ENCODE measurements at regions of chr6 and their contacts with region 1.

Region 1: GRCh38 chr6:20126789-20127653 is 85.2 kb downstream of the MBOAT1 start:
- DNase-seq: peak; percentile 64
- H3K4me3 Mint-ChIP-seq: no peak overlapping the region
- H3K27ac Mint-ChIP-seq: no peak overlapping the region
- H3K4me1 Mint-ChIP-seq: peaks cover 5% of the 10 kb centered on the region
- H3K27me3 Mint-ChIP-seq: no peaks in the 10 kb centered on the region

Region 2: GRCh38 chr6:19892260-19892659 is 234.8 kb before region 1 on chr6:
- CTCF ChIA-PET with region 1: no interaction called
- POLR2A ChIA-PET with region 1: no interaction called
- DNase-seq: no peak
- H3K4me3 Mint-ChIP-seq: no peak overlapping the region
- H3K27ac Mint-ChIP-seq: no peak overlapping the region
- H3K4me1 Mint-ChIP-seq: no peaks in the 10 kb centered on the region
- H3K27me3 Mint-ChIP-seq: no peaks in the 10 kb centered on the region

Region 3: DNA sequence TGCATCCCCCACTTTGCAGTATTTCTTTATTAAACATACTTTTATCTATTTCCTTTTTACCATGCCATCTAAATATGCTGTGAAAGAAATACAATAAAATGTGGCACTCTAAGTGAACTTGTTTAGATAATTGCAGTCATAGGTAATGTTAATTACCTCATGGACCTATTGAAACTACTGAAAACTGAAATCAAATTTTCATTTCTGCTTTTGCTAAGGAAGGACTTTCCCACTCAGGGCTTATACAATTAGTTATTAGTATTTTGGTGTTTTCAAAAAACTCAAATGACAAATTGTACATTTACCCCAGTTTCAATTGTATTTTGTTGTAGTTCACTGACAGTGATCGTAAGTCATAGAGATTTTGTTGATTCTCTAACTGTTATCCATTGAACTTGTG is 201.5 kb before region 1 on chr6:
- CTCF ChIA-PET with region 1: no interaction called
- POLR2A ChIA-PET with region 1: no interaction called
- DNase-seq: no peak
- H3K4me3 Mint-ChIP-seq: no peak overlapping the region
- H3K27ac Mint-ChIP-seq: no peak overlapping the region
- H3K4me1 Mint-ChIP-seq: no peaks in the 10 kb centered on the region
- H3K27me3 Mint-ChIP-seq: no peaks in the 10 kb centered on the region

Region 4: DNA sequence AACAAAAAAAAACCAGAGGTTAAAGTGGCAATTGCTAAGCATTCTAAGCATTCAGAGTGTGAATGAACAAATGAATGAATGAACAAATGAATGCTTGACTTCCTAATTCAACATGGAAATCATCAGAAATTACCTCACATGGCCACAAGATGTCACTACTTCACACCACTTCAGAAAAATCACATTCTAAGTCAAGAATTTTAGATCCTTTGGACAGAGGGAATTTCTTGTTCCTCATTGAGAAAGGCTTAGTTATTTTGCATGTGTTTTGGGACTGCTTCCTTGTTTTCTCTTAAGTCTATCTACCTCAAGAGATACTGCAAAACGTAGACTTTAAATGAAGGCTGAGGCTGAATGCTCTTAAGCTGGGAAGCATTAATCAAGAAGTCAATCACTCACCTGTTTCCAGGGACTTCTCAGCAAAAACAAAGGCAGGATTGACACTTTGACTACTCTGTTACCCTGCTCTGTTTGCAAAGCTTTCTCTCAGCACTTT is 34.9 kb before region 1 on chr6:
- CTCF ChIA-PET with region 1: interaction called, 37 read pairs
- POLR2A ChIA-PET with region 1: no interaction called
- DNase-seq: no peak
- H3K4me3 Mint-ChIP-seq: no peak overlapping the region
- H3K27ac Mint-ChIP-seq: no peak overlapping the region
- H3K4me1 Mint-ChIP-seq: no peaks in the 10 kb centered on the region
- H3K27me3 Mint-ChIP-seq: no peaks in the 10 kb centered on the region

Region 5: DNA sequence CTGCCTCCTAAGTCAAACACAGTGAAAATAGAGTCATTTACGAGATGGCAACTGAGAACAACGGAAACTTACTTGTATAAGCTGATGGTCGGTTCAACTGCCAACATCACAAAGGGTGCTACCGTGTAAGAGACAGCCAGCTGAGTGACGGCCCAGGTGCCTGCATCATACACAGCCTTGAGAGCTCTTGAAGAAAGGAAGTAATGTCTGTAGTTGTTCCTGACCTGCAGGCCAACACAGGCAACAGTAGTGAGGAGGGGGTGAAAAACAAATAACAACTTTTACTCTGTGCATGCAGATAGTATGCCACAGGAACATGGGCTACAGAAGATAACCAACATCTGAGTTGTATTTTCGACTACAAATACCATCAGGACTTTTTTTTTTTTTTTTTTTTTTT is 17.5 kb before region 1 on chr6:
- CTCF ChIA-PET with region 1: interaction called, 32 read pairs
- POLR2A ChIA-PET with region 1: no interaction called
- DNase-seq: no peak
- H3K4me3 Mint-ChIP-seq: no peak overlapping the region
- H3K27ac Mint-ChIP-seq: no peak overlapping the region
- H3K4me1 Mint-ChIP-seq: peaks cover 6% of the 10 kb centered on the region
- H3K27me3 Mint-ChIP-seq: no peaks in the 10 kb centered on the region

Region 6: DNA sequence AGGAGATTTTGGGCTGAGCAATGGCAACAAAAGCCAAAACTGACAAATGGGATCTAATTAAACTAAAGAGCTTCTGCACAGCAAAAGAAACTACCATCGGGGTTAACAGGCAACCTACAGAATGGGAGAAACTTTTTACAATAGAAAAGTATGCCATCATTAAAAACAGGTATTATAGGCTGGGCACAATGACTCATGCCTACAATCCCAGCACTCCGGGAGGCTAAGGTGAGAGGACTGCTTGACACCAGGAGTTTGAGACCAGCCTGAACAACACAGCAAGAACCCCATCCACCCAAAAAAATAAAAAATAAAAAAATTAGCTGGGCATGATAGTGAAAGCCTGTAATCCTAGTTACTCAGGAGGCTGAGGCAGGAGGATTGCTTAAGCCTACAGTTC is 29.8 kb after region 1 on chr6:
- CTCF ChIA-PET with region 1: interaction called, 10 read pairs
- POLR2A ChIA-PET with region 1: no interaction called
- DNase-seq: no peak
- H3K4me3 Mint-ChIP-seq: no peak overlapping the region
- H3K27ac Mint-ChIP-seq: no peak overlapping the region
- H3K4me1 Mint-ChIP-seq: no peaks in the 10 kb centered on the region
- H3K27me3 Mint-ChIP-seq: no peaks in the 10 kb centered on the region

Region 7: GRCh38 chr6:20202324-20202658 is 75.3 kb after region 1 on chr6:
- CTCF ChIA-PET with region 1: interaction called, 10 read pairs
- POLR2A ChIA-PET with region 1: no interaction called
- DNase-seq: no peak
- H3K4me3 Mint-ChIP-seq: no peak overlapping the region
- H3K27ac Mint-ChIP-seq: peak overlapping the region; percentile 22
- H3K4me1 Mint-ChIP-seq: peaks cover 80% of the 10 kb centered on the region
- H3K27me3 Mint-ChIP-seq: no peaks in the 10 kb centered on the region

Region 8: DNA sequence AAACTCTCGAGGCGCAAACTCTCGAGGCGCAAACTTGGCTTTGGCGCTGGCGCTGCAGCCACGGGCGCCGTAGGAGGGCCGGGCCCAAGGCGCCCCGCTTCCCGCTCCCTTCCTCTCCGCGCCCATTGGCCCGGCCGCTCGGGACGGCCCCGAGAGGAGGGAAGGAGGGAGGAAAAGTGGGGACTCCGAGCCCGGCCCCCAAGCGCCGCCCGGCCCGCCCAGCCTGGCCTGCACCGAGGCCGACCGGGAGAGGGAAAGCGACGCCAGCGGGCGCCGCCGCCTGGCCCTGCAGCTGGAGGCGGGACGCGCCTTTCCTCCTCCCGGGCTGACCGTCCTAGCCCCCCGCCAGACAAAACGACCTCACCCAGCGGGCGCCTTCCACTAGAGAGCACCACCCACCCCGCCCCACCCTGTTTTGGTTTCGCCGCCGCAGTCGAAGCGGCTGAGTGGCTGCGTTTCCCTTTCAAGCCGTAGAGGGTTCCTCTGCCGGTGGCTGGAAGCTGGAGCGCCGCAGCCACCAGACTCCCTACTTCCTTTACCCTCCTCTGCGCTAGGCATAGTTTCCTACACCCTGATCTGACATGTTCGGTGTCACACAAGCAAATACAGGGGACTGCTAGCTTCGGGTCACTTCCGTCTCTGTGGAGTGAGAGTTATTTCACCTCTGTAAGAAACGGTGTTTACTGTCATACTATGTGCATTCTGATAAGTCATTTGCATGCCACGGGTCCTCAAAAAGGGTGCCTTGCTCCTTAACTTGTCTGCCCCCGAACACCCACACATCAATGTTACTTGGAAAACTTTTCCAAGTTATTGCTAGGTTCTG is 85.6 kb after region 1 on chr6 and contains the start of gene MBOAT1:
- CTCF ChIA-PET with region 1: interaction called, 14 read pairs
- POLR2A ChIA-PET with region 1: interaction called, 3 read pairs
- DNase-seq: peak; percentile 79
- H3K4me3 Mint-ChIP-seq: peak within 1 kb of the TSS; percentile 93
- H3K27ac Mint-ChIP-seq: peak within 1 kb of the TSS; percentile 95
- H3K4me1 Mint-ChIP-seq: peaks cover 46% of the 10 kb centered on the region
- H3K27me3 Mint-ChIP-seq: no peaks in the 10 kb centered on the region
- total RNA-seq, gene MBOAT1: 25.5 to 27.1 TPM

Region 9: DNA sequence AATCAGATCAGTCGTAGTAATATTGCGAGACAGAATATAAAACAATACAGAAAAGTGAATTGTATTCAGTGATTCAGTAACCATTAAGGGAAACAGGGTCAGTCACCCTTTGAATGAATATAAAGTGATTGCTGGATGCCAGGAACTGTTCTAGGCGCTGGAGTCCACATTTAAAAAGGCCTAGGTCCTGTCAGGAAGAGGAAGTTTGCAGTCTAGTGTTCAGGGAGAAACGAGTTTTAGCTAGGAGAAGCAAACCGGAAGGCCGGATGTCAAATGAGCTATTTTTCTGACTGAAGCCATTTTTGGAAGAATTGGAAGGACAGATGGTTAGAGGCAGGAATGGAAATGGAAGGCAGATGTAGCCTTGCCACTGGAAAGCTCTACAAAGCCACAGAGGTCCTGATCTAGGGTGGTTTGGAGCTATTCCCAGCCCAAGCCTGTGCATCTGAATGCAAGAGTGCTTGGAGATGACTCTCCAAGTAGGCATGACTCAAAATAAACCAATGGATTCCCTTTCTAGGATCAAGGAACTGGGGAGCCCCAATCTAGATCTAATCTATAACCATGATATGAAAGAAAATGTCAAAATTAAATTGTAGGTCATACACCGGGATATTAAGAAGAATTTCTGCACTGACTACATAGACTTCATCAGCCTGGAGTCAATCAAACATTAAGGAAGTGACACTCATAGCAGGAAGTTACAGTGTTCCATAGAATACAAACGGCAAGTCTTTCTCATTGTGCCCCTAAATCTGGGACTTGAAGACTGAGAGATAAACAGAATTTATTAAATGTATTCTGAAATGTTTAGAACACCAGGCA is 370.4 kb after region 1 on chr6:
- CTCF ChIA-PET with region 1: no interaction called
- POLR2A ChIA-PET with region 1: no interaction called
- DNase-seq: no peak
- H3K4me3 Mint-ChIP-seq: no peak overlapping the region
- H3K27ac Mint-ChIP-seq: no peak overlapping the region
- H3K4me1 Mint-ChIP-seq: no peaks in the 10 kb centered on the region
- H3K27me3 Mint-ChIP-seq: no peaks in the 10 kb centered on the region

Region 10: DNA sequence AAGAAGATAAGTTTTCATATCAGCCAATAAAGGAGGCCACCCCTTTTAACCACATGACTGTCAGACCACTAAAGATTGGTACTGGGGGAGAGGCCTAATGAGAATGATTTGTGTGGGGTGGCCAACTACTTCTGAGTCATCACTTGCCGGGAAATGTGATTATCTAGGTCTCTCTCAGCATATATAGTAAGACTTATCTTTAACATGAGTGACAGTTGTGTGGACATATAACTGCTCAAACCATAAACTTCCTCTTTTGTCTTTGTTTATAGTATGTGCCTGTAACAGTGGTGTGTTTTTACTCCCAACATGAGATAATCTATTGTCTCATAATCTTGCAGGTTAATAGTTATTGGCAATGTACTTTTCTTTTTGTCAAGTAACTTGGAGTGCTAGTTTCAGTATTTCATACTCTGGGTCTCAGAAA is 719.6 kb after region 1 on chr6:
- CTCF ChIA-PET with region 1: no interaction called
- POLR2A ChIA-PET with region 1: no interaction called
- DNase-seq: no peak
- H3K4me3 Mint-ChIP-seq: no peak overlapping the region
- H3K27ac Mint-ChIP-seq: no peak overlapping the region
- H3K4me1 Mint-ChIP-seq: peaks cover 15% of the 10 kb centered on the region
- H3K27me3 Mint-ChIP-seq: no peaks in the 10 kb centered on the region